Prostate gland (tissue), 2 donors: ENCODE measurements at regions of chr17 and their contacts with region 1.

Region 1: GRCh38 chr17:11369575-11369974 is 128.6 kb downstream of the SHISA6 start:
- DNase-seq: no peak
- H3K4me3 ChIP-seq: no peak overlapping the region
- H3K27ac ChIP-seq: no peak overlapping the region
- H3K4me1 ChIP-seq: no peaks in the 10 kb centered on the region
- H3K27me3 ChIP-seq: no peaks in the 10 kb centered on the region
- CTCF ChIP-seq: no peak
- POLR2A ChIP-seq: no peak

Region 2: GRCh38 chr17:11302401-11303106 is 67.0 kb before region 1 on chr17:
- intact Hi-C with region 1: loop called (anchors 10 kb)
- DNase-seq: no peak
- H3K4me3 ChIP-seq: no peak overlapping the region
- H3K27ac ChIP-seq: no peak overlapping the region
- H3K4me1 ChIP-seq: no peaks in the 10 kb centered on the region
- H3K27me3 ChIP-seq: no peaks in the 10 kb centered on the region
- CTCF ChIP-seq: no peak
- POLR2A ChIP-seq: no peak

Region 3: DNA sequence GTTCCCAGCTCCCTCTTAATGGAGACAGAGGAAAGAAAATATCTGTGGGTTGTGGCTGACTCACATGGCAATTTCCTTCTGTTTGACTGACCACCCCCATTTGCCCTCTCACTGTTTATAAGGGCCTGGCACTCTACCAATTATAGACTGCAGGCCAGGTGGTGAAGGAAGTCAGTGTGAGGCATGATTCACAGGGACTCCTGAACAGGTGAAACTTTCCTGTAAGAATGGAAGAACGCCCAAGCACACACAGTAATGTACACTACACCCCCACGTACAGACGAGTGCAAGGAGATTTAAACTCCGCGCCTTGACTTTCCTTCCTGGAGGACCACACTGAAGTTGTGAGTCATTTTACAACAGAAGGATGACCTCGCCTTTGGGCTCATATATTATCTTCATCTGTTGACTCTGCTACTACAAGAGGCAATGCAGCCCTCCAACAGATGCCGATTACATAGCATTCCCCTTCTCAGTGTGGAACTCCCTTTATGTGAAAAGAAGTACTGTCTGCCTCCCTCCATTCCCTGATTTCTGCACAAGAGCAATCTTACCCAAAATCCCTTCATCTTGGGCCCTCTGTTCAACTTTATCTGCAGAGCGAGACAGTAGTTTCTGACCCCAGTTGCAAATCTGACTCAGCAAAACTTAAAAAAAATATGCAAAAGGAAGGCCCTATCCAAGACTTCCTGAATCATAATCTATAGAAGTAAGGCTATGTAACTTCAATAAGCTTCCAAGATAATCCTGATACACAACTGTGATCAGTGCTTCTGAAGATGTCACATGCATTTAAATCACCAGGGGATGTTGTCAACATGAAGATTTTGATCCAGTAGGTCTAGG is 35.1 kb after region 1 on chr17:
- intact Hi-C with region 1: no loop called
- DNase-seq: no peak
- H3K4me3 ChIP-seq: no peak overlapping the region
- H3K27ac ChIP-seq: no peak overlapping the region
- H3K4me1 ChIP-seq: no peaks in the 10 kb centered on the region
- H3K27me3 ChIP-seq: no peaks in the 10 kb centered on the region
- CTCF ChIP-seq: no peak
- POLR2A ChIP-seq: no peak